Posterior cingulate gyrus (tissue), 11 donors: ENCODE measurements at regions of chr17 and their contacts with region 1.

Region 1: GRCh38 chr17:13160296-13160695 is 142.5 kb upstream of the ELAC2 start:
- DNase-seq: no peak

Region 2: DNA sequence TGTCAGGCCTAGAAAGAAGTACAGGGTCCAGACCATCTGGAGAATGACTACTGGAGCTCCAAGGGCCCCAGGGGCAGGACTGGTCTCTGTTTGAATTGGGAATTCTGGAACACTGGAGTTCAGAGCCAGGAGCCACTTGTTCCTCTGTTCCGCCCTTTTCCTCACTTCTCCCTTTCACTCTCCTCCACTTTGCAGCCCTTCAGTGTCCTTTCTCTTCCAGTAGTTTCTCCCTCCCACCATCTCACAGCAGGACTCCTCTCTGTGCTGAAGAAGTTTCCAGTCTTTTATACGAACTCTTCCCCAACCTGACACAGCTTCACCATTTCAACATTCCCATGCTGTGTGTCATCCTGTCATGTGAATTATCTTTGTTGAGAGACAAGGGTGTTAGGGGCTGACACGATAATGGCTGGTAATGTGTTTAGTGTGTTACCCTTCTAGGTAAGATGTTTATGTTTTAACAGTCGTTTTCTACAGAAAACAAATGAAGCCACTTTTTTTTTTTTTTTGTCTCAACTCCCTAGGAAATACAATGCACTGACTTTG is 674.9 kb before region 1 on chr17:
- intact Hi-C with region 1: loop called (anchors 10 kb)
- DNase-seq: no peak

Region 3: GRCh38 chr17:12928741-12929140 is 231.6 kb before region 1 on chr17:
- intact Hi-C with region 1: no loop called
- DNase-seq: no peak

Region 4: DNA sequence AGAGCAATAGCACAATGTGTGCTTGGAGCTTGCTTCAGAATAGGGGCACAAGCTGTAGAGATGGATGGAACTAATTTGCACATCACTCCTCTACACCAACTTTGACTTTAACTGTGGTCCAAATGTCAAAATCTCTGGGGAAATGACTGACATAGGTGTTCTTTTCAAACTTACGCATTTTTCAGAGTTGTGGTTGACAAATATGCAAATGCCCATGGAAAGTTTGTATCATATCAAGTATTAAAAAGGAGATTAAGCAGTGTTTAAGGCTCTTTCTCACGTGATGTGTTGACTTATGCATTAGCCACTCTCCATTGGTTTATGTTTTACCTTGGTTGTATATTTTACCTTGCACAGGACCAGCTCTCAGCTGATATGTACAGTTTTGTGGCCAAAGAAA is 219.6 kb before region 1 on chr17:
- intact Hi-C with region 1: no loop called
- DNase-seq: no peak

Region 5: GRCh38 chr17:13204574-13205219 is 44.4 kb after region 1 on chr17:
- intact Hi-C with region 1: no loop called
- DNase-seq: no peak